Caco-2 (cell line): ENCODE measurements at regions of chrX and their contacts with region 1.

Region 1: DNA sequence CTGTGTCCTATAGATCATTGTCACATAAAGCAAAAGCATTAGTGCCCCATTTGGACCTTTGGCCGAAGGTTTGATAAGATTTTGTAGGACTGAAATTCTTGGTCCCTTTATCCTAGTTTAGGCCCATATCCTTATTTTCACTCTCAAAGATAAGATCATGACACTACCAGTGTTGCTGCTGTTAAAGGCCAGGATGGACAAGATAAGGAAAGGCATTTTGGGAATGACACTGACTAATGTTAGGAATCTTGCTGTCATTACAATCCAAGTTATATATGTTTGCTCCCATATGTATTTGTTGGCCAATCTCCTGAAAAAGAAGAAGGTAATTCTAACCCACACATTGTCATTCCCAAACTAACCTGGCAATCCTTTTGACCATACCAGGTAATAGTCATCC is 101.3 kb upstream of the VAMP7 start:
- DNase-seq: peak; percentile 4 to 36
- H3K4me3 ChIP-seq: no peak overlapping the region
- H3K4me3 Mint-ChIP-seq: no peak overlapping the region
- H3K27ac Mint-ChIP-seq: no peak overlapping the region
- H3K4me1 ChIP-seq: peaks cover 26% of the 10 kb centered on the region
- H3K4me1 Mint-ChIP-seq: no peaks in the 10 kb centered on the region
- H3K27me3 ChIP-seq: no peaks in the 10 kb centered on the region
- H3K27me3 Mint-ChIP-seq: no peaks in the 10 kb centered on the region
- CTCF ChIP-seq: no peak

Region 2: GRCh38 chrX:155767051-155767875 is 12.6 kb before region 1 on chrX:
- CTCF ChIA-PET with region 1: no interaction called
- POLR2A ChIA-PET with region 1: no interaction called
- intact Hi-C with region 1: loop called (anchors 2 kb)
- DNase-seq: peak; percentile 18 to 68
- H3K4me3 ChIP-seq: peak overlapping the region; percentile 13
- H3K4me3 Mint-ChIP-seq: peak overlapping the region; percentile 77
- H3K27ac Mint-ChIP-seq: no peak overlapping the region
- H3K4me1 ChIP-seq: no peaks in the 10 kb centered on the region
- H3K4me1 Mint-ChIP-seq: peaks cover 6% of the 10 kb centered on the region
- H3K27me3 ChIP-seq: no peaks in the 10 kb centered on the region
- H3K27me3 Mint-ChIP-seq: no peaks in the 10 kb centered on the region
- CTCF ChIP-seq: no peak

Region 3: GRCh38 chrX:155819966-155820491 is 40.2 kb after region 1 on chrX:
- CTCF ChIA-PET with region 1: no interaction called
- POLR2A ChIA-PET with region 1: no interaction called
- intact Hi-C with region 1: no loop called
- DNase-seq: peak; percentile 64 to 66
- H3K4me3 ChIP-seq: no peak overlapping the region
- H3K4me3 Mint-ChIP-seq: no peak overlapping the region
- H3K27ac Mint-ChIP-seq: no peak overlapping the region
- H3K4me1 ChIP-seq: no peaks in the 10 kb centered on the region
- H3K4me1 Mint-ChIP-seq: no peaks in the 10 kb centered on the region
- H3K27me3 ChIP-seq: no peaks in the 10 kb centered on the region
- H3K27me3 Mint-ChIP-seq: no peaks in the 10 kb centered on the region
- CTCF ChIP-seq: peak; percentile 47 to 55